CD4-positive, alpha-beta memory T cell (primary cell): ENCODE measurements at regions of chr12 and their contacts with region 1.

Region 1: GRCh38 chr12:110245369-110245772 is 35.7 kb upstream of the ATP2A2 start:
- DNase-seq: peak in 4 of 5 donors; percentile 28 to 44 (median 35)
- H3K4me3 ChIP-seq: no peak overlapping the region
- H3K4me3 Mint-ChIP-seq: no peak overlapping the region
- H3K27ac ChIP-seq: no peak overlapping the region
- H3K27ac Mint-ChIP-seq: peak overlapping the region in 1 of 7 donors; percentile 56
- H3K4me1 ChIP-seq: no peaks in the 10 kb centered on the region
- H3K4me1 Mint-ChIP-seq: no peaks in the 10 kb centered on the region
- H3K27me3 ChIP-seq: no peaks in the 10 kb centered on the region
- H3K27me3 Mint-ChIP-seq: peaks cover 0 to 6% of the 10 kb centered on the region in 2 donors

Region 2: DNA sequence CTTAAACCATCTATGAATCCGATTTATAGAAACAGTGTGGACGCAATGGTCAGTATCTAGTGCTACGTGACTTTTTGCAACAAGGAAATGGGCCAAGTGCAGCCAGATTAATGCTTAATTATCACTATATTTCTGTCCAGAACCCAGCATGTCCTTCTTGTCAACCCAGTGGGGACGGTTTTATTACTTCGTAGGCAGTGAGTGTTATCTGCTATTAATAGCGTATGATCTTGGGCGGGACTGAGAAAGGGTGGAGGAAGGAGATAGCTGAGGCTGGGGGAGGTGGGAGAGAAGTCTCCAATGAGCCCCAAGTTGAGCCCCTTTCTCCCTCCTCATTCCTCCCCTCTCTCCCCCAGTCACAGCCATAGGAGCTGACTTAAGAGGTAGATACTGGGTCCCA is 591.5 kb before region 1 on chr12:
- CTCF ChIA-PET with region 1: no interaction called
- POLR2A ChIA-PET with region 1: no interaction called
- intact Hi-C with region 1: no loop called
- DNase-seq: no peak
- H3K4me3 ChIP-seq: no peak overlapping the region
- H3K4me3 Mint-ChIP-seq: no peak overlapping the region
- H3K27ac ChIP-seq: no peak overlapping the region
- H3K27ac Mint-ChIP-seq: no peak overlapping the region
- H3K4me1 ChIP-seq: no peaks in the 10 kb centered on the region
- H3K4me1 Mint-ChIP-seq: no peaks in the 10 kb centered on the region
- H3K27me3 ChIP-seq: peaks cover 4% of the 10 kb centered on the region
- H3K27me3 Mint-ChIP-seq: peaks cover 4 to 13% of the 10 kb centered on the region in 2 donors

Region 3: GRCh38 chr12:109963743-109964429 is 281.5 kb before region 1 on chr12:
- CTCF ChIA-PET with region 1: no interaction called
- POLR2A ChIA-PET with region 1: no interaction called
- intact Hi-C with region 1: no loop called
- DNase-seq: no peak
- H3K4me3 ChIP-seq: no peak overlapping the region
- H3K4me3 Mint-ChIP-seq: no peak overlapping the region
- H3K27ac ChIP-seq: no peak overlapping the region
- H3K27ac Mint-ChIP-seq: peak overlapping the region in 5 of 7 donors; percentile 68 to 86 (median 85)
- H3K4me1 ChIP-seq: peaks cover 19% of the 10 kb centered on the region
- H3K4me1 Mint-ChIP-seq: peaks cover 13 to 37% (median 25%) of the 10 kb centered on the region in 4 donors
- H3K27me3 ChIP-seq: no peaks in the 10 kb centered on the region
- H3K27me3 Mint-ChIP-seq: no peaks in the 10 kb centered on the region

Region 4: GRCh38 chr12:110100315-110100970 is 144.9 kb before region 1 on chr12:
- CTCF ChIA-PET with region 1: interaction called, 21 read pairs
- POLR2A ChIA-PET with region 1: no interaction called
- intact Hi-C with region 1: no loop called
- DNase-seq: peak; percentile 52 to 60 (median 56)
- H3K4me3 ChIP-seq: no peak overlapping the region
- H3K4me3 Mint-ChIP-seq: peak overlapping the region in 2 of 8 donors; percentile 11 to 64
- H3K27ac ChIP-seq: no peak overlapping the region
- H3K27ac Mint-ChIP-seq: peak overlapping the region in 6 of 7 donors; percentile 0 to 43 (median 16)
- H3K4me1 ChIP-seq: peaks cover 6% of the 10 kb centered on the region
- H3K4me1 Mint-ChIP-seq: peaks cover 5 to 8% (median 6%) of the 10 kb centered on the region in 4 donors
- H3K27me3 ChIP-seq: no peaks in the 10 kb centered on the region
- H3K27me3 Mint-ChIP-seq: no peaks in the 10 kb centered on the region